Upper lobe of right lung (tissue), 1 donor: ENCODE measurements at regions of chr16 and their contacts with region 1.

Region 1: DNA sequence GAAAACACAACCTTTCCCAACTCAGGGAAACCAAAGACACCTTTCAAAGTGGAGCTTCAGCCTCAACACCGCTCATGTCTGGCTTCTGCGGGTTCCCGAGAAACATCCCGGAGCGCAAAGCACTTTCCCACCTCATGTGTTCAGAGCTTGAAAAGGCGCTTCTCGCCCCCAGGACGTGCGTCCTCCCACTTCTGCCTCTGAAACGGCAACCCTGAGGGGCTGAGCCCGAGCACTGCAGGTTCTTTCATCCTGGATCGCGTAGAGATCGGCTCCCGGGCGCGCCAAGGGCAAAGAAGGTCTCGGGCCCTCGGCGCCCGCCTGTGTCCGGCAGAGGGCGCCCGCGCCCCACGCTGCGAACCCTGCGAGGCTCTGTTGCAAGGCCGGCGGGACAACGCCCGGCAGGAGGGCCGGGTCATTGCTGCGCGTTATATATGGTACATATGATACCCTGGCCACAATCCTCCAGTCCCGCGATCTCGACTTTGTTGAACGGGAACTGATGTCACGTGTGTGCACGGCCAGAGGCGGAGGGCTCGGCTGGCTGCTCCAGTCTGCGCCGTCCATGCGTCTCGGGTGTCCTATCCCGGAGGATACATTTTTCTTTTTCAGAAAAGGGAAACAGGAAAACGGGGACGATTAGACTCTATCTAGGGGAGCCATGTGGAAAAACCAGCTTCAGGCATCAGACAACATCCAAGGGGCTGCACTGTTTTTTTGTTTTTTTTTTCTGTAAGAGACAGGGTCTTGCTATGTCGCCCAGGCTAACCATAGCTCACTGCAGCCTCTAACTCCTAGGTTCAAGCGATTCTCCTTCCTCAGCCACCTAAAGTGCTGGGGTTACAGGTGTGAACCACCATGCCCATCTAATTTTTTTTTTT is 19.1 kb downstream of the COQ7 start:
- DNase-seq: peak; percentile 93
- ATAC-seq: peak; percentile 100
- H3K4me3 ChIP-seq: peak overlapping the region; percentile 51
- H3K27ac ChIP-seq: no peak overlapping the region
- H3K4me1 ChIP-seq: peaks cover 8% of the 10 kb centered on the region
- H3K27me3 ChIP-seq: no peaks in the 10 kb centered on the region
- CTCF ChIP-seq: peak; percentile 99

Region 2: DNA sequence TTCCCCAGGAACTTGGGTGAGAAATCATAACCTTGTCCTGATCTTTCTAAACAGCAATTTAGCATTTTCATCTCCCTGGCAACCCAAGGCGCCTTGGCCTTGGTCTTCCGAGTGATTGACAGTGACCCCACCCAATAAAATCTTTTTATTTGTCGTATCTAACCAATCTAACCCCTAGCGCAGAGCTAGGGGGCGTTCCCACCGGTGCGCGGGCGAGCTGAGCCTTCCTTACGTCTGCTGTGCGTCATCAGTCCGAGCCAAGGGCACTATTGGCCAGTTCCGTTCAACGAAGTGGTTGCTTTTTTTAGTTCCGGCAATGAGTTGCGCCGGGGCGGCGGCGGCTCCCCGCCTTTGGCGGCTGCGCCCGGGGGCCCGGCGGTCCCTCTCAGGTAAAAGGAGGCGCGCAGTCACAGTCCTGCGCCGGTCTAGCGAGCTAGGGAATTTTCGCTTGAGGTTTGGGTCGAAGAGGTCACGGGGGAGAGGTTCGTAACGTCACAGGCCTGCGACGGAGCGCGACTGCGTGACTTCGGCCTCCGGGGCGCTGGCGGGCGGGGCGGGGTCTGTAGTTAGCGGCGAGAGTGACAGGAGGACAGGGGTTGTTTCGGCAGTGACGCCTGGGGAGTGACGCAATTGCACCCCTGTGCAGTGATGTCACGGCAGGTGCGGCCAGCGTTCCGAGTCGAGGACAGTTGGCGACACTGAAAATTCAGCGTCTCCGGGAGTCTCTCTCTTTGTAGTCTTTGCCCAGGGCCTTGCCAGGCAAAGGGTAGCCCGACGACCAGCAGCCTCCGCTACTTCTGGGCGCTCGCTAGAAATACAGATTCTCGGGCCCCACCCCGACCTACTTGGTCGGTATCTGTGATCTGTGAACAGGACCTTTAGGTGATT is 19.0 kb before region 1 on chr16 and contains the start of gene COQ7:
- intact Hi-C with region 1: no loop called
- DNase-seq: peak; percentile 100
- ATAC-seq: peak; percentile 96
- H3K4me3 ChIP-seq: peak within 1 kb of the TSS; percentile 85
- H3K27ac ChIP-seq: peak within 1 kb of the TSS; percentile 100
- H3K4me1 ChIP-seq: peaks cover 14% of the 10 kb centered on the region
- H3K27me3 ChIP-seq: no peaks in the 10 kb centered on the region
- CTCF ChIP-seq: no peak
- total RNA-seq, gene COQ7: 15.4 TPM

Region 3: DNA sequence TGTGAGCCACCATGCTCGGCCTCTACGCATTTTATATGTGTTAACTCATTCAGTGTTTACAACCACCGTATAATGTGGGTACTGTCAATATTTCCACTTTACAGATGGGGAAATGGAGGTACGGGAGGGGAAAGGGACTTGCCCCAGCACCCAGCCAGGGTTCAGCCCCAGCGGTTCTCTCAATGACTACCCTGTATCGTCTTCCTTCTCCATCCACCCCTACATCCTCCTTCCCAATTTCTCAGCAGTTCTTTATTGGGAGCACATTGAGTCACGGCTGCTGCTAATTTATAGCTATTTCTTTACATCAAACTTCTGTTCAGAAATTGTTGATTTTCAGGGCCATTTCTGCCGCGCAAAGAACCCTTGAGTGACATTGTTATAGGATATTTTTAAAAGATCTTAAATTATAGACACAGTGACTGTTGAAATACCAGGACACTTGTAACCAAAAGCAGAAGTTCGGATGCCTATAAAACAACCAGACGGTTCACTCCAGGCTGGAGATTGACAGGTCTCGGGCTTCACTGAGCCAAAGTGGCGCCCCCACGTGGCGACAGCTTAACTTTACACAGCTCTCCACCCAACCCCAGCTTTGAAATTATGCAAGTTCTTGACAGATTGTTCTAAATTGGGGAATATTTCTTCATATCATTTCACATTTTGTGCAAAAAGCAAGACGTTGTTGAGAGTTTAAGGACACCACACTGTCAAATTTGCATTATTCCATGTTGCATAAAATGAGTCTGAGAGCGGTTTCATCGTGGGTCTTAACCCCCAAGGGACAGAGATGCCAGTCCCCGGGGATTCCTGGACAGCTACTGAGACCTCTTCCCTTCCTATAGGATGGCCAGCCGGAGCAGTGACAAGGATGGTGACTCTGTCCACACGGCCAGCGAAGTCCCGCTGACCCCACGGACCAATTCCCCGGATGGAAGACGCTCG is 93.3 kb after region 1 on chr16:
- intact Hi-C with region 1: loop called (anchors 10 kb)
- DNase-seq: peak; percentile 88
- ATAC-seq: peak; percentile 90
- H3K4me3 ChIP-seq: no peak overlapping the region
- H3K27ac ChIP-seq: no peak overlapping the region
- H3K4me1 ChIP-seq: peaks cover 22% of the 10 kb centered on the region
- H3K27me3 ChIP-seq: no peaks in the 10 kb centered on the region
- CTCF ChIP-seq: peak; percentile 78

Region 4: DNA sequence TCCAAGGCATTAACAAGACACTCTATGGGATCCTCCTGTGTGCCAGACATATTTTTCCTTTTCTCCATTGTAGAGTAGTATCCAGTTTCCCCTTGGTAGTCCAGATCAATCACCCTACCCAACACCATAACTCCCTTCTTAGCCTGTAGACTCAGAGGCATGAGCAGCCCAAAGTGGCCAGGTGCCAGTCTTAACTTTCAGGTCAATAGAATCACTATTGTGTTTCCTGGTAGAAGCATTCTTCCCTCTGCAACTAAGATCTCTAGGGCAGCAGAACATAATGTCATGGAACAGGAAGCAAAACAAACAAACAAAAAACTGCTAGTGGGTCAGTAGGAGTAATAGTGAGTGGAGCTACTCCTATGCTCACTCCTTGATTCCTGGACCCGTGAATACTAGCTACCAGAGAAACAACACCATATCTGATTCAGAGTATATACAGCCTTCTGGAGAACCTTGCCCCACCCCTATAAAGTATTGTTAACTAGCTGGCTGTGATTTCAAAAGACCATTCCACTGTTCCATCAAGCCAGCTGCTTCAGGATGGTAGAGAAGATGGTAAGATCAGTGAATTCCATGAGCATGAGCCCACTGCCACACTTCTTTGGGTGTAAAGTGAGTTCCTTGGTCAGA is 187.7 kb after region 1 on chr16:
- intact Hi-C with region 1: no loop called
- DNase-seq: no peak
- ATAC-seq: no peak
- H3K4me3 ChIP-seq: no peak overlapping the region
- H3K27ac ChIP-seq: no peak overlapping the region
- H3K4me1 ChIP-seq: no peaks in the 10 kb centered on the region
- H3K27me3 ChIP-seq: no peaks in the 10 kb centered on the region
- CTCF ChIP-seq: no peak

Region 5: GRCh38 chr16:19375561-19376158 is 289.1 kb after region 1 on chr16:
- intact Hi-C with region 1: loop called (anchors 10 kb)
- DNase-seq: no peak
- ATAC-seq: peak; percentile 86
- H3K4me3 ChIP-seq: no peak overlapping the region
- H3K27ac ChIP-seq: no peak overlapping the region
- H3K4me1 ChIP-seq: peaks cover 10% of the 10 kb centered on the region
- H3K27me3 ChIP-seq: no peaks in the 10 kb centered on the region
- CTCF ChIP-seq: peak; percentile 88